Heart right ventricle (tissue), 16 donors: ENCODE measurements at regions of chr22 and their contacts with region 1.

Region 1: GRCh38 chr22:25680956-25681355 is 61.0 kb upstream of the MYO18B start:
- DNase-seq: no peak
- ATAC-seq: peak in 3 of 8 donors; percentile 28 to 48 (median 38)
- H3K4me3 ChIP-seq: no peak overlapping the region
- H3K27ac ChIP-seq: no peak overlapping the region
- H3K4me1 ChIP-seq: peaks cover 0 to 8% (median 0%) of the 10 kb centered on the region in 9 donors
- H3K27me3 ChIP-seq: no peaks in the 10 kb centered on the region
- CTCF ChIP-seq: no peak

Region 2: DNA sequence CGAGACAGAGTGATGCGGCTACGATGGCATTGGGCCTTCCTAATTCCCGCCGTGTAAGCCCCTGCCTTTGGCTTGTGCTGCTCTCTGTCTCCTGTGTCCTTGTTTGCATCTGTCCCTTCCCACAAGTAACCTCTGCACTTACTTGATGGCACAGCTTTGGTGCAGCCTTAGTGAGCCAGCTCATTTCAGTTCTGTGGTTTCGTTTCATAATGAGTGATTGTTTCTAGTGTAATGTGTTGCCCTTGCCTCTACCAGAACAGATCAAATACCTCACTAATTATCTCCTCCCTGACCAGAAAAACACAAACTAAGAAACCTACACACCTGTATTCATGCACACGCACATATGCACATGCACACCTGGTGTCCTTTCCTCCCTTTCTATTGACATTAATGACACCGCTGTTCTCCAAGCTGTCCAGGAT is 57.6 kb before region 1 on chr22:
- intact Hi-C with region 1: loop called in 1 of 10 experiments (anchors 10 kb)
- DNase-seq: no peak
- ATAC-seq: no peak
- H3K4me3 ChIP-seq: no peak overlapping the region
- H3K27ac ChIP-seq: no peak overlapping the region
- H3K4me1 ChIP-seq: peaks cover 0 to 13% (median 0%) of the 10 kb centered on the region in 9 donors
- H3K27me3 ChIP-seq: no peaks in the 10 kb centered on the region
- CTCF ChIP-seq: no peak